ENCODE measurements at regions of chr6 and their contacts with region 1.

Region 1: DNA sequence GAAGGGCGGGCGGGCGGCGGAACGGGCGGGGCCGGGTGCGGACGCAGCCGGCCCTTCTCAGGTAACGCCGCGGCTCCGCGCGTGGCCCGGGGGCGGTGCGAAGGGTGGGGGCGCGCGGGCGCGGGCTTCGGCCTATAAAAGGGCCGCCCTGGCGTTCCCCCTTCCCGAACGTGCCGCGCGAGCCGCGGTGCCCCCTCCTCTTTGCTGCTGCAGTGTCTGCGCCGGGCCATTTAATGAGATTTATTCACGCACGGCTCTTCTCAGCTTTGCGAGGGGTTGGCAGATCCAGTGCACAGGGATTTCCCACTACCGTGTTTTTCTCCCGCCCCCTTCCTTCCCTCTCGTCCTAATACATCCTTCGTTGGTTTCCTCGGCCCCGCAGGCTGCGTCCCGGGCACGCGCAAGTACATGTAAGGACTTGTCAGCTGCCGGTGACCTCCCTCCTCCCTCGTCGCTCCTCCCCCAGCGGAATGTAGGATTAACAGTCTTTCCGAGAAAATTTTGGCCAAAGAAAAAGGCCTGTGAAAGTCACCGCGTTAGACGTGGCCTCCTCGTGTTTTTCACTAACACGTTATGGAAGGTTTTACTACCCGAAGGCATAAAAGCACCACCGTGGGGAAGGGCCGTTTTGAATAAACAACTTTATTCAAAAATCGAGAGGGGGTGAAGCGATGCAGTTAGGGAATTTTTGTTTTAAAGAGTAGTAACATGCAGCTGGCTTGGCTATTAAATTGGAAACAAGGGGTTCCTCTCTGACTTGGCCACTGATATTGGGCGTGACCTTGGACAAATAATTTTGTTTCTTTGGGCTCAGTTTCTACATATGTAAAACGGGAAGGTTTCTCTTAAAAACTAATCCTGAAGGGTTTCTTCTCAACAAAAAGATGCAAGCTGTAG is 966 bp upstream of the REV3L start:
- DNase-seq: peak; percentile 96
- H3K4me3 Mint-ChIP-seq: peak overlapping the region; percentile 90
- H3K27ac Mint-ChIP-seq: peak overlapping the region; percentile 98
- H3K4me1 Mint-ChIP-seq: peaks cover 47% of the 10 kb centered on the region
- H3K27me3 Mint-ChIP-seq: no peaks in the 10 kb centered on the region

Region 2: GRCh38 chr6:111087106-111087835 is 396.7 kb before region 1 on chr6 and contains the start of gene SLC16A10:
- intact Hi-C with region 1: loop called (anchors 5 kb)
- DNase-seq: peak; percentile 93
- H3K4me3 Mint-ChIP-seq: peak within 1 kb of the TSS; percentile 90
- H3K27ac Mint-ChIP-seq: peak within 1 kb of the TSS; percentile 81
- H3K4me1 Mint-ChIP-seq: peaks cover 20% of the 10 kb centered on the region
- H3K27me3 Mint-ChIP-seq: peaks cover 21% of the 10 kb centered on the region
- total RNA-seq, gene SLC16A10: 4.2 and 5.1 TPM in 2 replicates

Region 3: DNA sequence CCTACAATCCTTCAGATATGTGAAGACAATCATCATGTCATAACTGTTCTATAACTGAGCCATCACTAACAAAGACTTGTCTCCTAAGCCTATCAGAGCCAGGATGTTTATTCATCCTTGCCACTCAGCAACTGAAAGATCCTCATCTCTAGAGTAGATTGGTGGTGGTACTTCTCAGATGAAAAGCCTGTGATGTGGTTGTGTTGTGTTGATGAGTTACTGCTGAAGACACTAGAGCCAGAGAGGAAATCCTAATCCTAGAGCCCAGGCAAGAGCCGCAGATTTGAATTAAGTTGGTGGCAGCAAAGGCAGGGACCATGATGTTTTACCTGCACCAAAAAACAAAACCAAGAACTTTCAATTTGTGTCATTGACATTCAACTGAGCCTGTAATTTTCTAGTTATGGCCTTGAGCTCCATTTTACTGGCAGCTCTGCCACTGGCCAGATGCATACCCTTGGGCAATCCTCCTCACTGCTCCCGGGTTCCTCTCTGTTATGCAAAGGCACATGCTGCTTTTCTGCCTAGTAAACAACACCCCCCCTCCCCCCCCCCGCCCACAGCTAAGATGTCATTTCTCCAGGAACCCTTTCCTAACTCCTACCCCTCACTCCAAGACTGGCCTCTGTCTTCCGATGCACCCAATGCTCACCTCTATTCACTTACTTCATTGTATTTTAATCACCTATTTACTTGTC is 49.3 kb after region 1 on chr6:
- intact Hi-C with region 1: loop called (anchors 1 kb)
- DNase-seq: peak; percentile 79
- H3K4me3 Mint-ChIP-seq: peak overlapping the region; percentile 2
- H3K27ac Mint-ChIP-seq: peak overlapping the region; percentile 46
- H3K4me1 Mint-ChIP-seq: peaks cover 26% of the 10 kb centered on the region
- H3K27me3 Mint-ChIP-seq: no peaks in the 10 kb centered on the region

Region 4: GRCh38 chr6:111642463-111643158 is 158.6 kb after region 1 on chr6:
- intact Hi-C with region 1: loop called (anchors 10 kb)
- DNase-seq: peak; percentile 81
- H3K4me3 Mint-ChIP-seq: no peak overlapping the region
- H3K27ac Mint-ChIP-seq: no peak overlapping the region
- H3K4me1 Mint-ChIP-seq: no peaks in the 10 kb centered on the region
- H3K27me3 Mint-ChIP-seq: no peaks in the 10 kb centered on the region

Region 5: DNA sequence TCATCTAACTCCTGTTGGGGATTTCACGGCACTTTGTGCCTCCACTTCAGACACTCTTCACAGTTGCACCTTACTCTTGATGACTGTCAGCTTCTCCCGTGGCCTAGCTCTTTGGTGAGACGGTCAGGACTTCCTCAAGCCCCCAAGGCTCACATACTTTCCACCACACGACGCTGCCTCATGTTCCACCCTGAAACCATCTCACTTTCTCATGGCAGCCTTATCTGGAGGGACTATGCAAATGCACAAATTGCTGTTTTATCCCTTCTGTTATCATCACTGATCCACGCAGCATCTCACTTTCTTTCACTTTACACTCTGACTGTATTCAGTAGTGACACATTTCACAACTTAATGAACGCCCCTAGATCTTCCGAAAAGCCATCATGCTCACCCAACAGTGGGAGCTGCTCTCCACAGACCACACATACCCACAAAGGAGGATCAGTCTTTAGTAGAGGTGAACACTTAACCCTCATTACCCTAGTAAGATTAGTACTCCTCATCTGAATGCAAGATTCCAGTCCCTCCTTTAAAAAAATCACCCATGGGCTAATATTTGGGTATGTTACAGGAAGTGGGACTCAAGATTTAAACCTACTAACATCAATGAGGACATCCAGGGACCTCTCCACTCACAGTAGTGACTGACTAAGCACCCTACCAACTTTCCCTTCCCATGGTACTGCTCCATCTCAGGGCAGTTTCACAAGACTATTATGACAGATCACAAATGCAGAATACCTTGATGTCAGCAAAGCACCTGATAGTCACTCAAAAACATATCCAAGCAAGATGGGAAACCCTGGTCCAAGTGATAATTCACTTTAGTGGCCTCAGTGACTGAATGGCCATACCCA is 353.9 kb after region 1 on chr6:
- intact Hi-C with region 1: loop called (anchors 10 kb)
- DNase-seq: peak; percentile 86
- H3K4me3 Mint-ChIP-seq: peak overlapping the region; percentile 75
- H3K27ac Mint-ChIP-seq: peak overlapping the region; percentile 96
- H3K4me1 Mint-ChIP-seq: peaks cover 64% of the 10 kb centered on the region
- H3K27me3 Mint-ChIP-seq: no peaks in the 10 kb centered on the region

Region 6: DNA sequence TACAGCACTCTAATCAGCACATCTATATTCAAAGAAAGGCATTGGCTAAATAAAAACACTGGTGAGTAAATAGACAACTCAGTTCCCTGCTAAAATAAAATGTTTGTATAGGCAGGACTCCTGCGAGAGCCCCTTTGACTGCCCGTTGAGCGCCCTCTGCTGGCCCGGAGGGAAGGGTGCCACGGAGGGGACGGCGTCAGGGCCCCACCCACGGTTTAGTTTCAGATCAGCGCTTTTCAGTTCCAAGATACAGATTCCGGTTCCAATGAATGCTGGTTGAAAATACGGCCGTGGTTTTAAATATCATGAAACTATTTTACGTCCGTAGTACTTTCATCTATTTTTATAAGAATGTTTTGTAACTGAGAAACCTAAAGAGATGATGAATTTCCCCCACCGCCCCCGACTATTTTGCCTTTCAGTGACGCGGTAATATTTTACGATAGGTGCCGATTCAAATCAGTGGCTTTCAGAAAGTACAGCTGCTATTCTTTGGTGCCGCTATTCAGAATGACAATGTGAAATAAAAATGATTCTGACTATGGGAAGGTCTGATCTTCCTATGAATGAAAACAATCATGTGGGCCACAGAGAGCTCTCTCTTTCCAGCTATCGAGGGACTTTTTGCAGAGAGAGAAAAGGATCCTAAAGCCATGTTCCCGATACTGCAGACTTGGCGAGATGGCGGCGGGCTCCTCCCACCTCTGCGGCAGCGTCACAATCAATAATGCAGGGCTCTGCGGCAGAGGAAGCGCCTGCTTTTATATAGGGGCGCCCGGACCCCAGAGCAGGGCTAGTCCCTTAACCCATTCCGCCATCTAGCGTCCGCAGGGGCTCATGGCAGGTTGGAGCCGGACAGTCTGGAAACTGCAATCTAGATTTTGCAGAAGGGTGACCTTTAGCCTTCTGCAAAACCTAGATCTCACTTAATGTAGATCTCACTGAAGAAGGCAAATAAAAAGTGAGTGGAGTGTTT is 559.3 kb after region 1 on chr6:
- intact Hi-C with region 1: loop called (anchors 1 kb)
- DNase-seq: peak; percentile 97
- H3K4me3 Mint-ChIP-seq: peak overlapping the region; percentile 93
- H3K27ac Mint-ChIP-seq: peak overlapping the region; percentile 96
- H3K4me1 Mint-ChIP-seq: peaks cover 24% of the 10 kb centered on the region
- H3K27me3 Mint-ChIP-seq: no peaks in the 10 kb centered on the region

Measured in activated CD4-positive, alpha-beta T cell treated with anti-CD3 and anti-CD28 coated beads, Interleukin-2, amount 10 ng/mL, durations not matched to agents 24 days and 14 days (primary cell).